Activated naive CD4-positive, alpha-beta T cell treated with anti-CD3 and anti-CD28 coated beads for 36 hours (primary cell): ENCODE measurements at regions of chr16 and their contacts with region 1.

Region 1: GRCh38 chr16:67311607-67312488 is 14.7 kb downstream of the KCTD19 start:
- DNase-seq: peak; percentile 98
- H3K4me3 Mint-ChIP-seq: peak overlapping the region; percentile 13
- H3K27ac Mint-ChIP-seq: peak overlapping the region; percentile 96
- H3K4me1 Mint-ChIP-seq: peaks cover 44% of the 10 kb centered on the region
- H3K27me3 Mint-ChIP-seq: no peaks in the 10 kb centered on the region

Region 2: DNA sequence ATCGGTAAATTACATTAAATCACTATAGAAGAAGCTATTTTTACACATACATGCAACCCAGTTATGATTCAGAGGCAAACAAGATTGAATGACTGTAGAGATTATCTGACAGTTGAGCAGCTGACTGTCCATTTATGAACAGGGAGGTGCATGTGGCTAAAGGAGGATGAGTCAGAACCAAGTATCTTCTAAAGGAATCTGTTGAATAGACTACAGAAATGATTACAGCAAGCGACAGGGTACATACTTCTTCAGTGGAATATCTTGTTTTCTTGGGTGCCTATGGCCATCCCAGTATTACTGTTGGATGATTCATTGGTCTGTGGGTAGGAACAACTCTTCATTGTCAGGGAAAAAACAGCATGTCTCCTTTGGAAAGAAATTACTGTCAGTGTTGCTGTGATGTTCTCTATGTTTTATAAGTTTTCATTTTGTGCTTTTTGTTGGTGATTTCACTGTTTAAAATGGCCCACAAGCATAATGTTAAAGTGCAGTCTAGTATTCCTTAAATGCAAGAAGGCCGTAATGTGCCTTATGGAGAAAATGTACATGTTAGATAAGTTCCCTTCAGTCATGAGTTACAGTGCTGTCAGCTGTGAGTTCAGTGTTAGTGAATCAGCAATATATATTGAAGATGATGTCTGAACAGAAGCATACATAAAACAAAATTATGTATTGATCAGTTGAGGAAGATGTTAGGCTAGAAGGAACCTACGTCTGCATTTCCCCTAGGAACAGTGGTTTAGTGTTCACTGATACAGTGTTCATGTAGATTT is 255.9 kb before region 1 on chr16:
- CTCF ChIA-PET with region 1: no interaction called
- intact Hi-C with region 1: loop called (anchors 2 kb)
- DNase-seq: peak; percentile 26
- H3K4me3 Mint-ChIP-seq: no peak overlapping the region
- H3K27ac Mint-ChIP-seq: peak overlapping the region; percentile 32
- H3K4me1 Mint-ChIP-seq: peaks cover 50% of the 10 kb centered on the region
- H3K27me3 Mint-ChIP-seq: no peaks in the 10 kb centered on the region

Region 3: GRCh38 chr16:67226804-67227557 is 84.9 kb before region 1 on chr16 and contains the start of gene TMEM208:
- CTCF ChIA-PET with region 1: no interaction called
- intact Hi-C with region 1: loop called (anchors 1 kb)
- DNase-seq: peak; percentile 99
- H3K4me3 Mint-ChIP-seq: peak within 1 kb of the TSS; percentile 100
- H3K27ac Mint-ChIP-seq: peak within 1 kb of the TSS; percentile 96
- H3K4me1 Mint-ChIP-seq: peaks cover 51% of the 10 kb centered on the region
- H3K27me3 Mint-ChIP-seq: no peaks in the 10 kb centered on the region
- total RNA-seq, gene TMEM208: 24.6 to 29.4 TPM

Region 4: GRCh38 chr16:67279296-67280089 is 32.4 kb before region 1 on chr16 and contains the start of gene PLEKHG4:
- CTCF ChIA-PET with region 1: interaction called, 4 read pairs
- intact Hi-C with region 1: loop called (anchors 1 kb)
- DNase-seq: peak; percentile 85
- H3K4me3 Mint-ChIP-seq: peak within 1 kb of the TSS; percentile 79
- H3K27ac Mint-ChIP-seq: peak within 1 kb of the TSS; percentile 86
- H3K4me1 Mint-ChIP-seq: peaks cover 20% of the 10 kb centered on the region
- H3K27me3 Mint-ChIP-seq: no peaks in the 10 kb centered on the region
- total RNA-seq, gene PLEKHG4: 14.3 to 14.4 TPM

Region 5: GRCh38 chr16:67349172-67349571 is 37.3 kb after region 1 on chr16:
- CTCF ChIA-PET with region 1: no interaction called
- intact Hi-C with region 1: no loop called
- DNase-seq: no peak
- H3K4me3 Mint-ChIP-seq: no peak overlapping the region
- H3K27ac Mint-ChIP-seq: no peak overlapping the region
- H3K4me1 Mint-ChIP-seq: no peaks in the 10 kb centered on the region
- H3K27me3 Mint-ChIP-seq: no peaks in the 10 kb centered on the region

Region 6: DNA sequence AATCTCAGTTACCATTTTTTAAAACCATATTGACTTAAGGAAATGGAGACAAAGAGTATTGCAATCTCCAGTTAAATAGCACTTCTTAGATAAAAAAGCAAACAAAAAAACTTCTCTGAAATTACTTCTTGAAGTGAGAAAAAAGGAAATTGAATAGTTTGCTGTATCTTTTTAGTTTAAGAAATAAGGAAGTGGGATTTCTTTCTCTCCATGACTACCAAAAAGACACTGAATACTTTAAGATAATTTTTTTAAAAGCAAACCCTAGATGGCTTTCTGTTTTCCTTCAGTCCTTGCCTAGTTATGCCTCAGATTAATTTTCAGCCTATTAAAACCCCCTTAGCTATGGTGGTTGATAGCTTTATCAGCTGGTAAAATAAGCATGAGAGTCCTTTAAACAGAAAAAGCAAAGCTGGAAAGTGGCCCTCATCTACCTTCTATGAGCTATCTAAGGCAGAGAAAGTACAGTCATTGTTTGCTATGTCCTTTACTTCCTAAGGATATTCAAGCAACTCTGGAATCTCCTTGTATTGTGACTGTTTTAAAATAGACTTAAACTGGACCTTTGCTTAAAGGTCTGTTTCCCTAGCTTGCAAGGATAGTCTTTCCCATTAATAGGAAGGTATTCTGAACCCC is 52.9 kb after region 1 on chr16:
- CTCF ChIA-PET with region 1: no interaction called
- intact Hi-C with region 1: loop called (anchors 1 kb)
- DNase-seq: no peak
- H3K4me3 Mint-ChIP-seq: no peak overlapping the region
- H3K27ac Mint-ChIP-seq: no peak overlapping the region
- H3K4me1 Mint-ChIP-seq: peaks cover 10% of the 10 kb centered on the region
- H3K27me3 Mint-ChIP-seq: no peaks in the 10 kb centered on the region

Region 7: DNA sequence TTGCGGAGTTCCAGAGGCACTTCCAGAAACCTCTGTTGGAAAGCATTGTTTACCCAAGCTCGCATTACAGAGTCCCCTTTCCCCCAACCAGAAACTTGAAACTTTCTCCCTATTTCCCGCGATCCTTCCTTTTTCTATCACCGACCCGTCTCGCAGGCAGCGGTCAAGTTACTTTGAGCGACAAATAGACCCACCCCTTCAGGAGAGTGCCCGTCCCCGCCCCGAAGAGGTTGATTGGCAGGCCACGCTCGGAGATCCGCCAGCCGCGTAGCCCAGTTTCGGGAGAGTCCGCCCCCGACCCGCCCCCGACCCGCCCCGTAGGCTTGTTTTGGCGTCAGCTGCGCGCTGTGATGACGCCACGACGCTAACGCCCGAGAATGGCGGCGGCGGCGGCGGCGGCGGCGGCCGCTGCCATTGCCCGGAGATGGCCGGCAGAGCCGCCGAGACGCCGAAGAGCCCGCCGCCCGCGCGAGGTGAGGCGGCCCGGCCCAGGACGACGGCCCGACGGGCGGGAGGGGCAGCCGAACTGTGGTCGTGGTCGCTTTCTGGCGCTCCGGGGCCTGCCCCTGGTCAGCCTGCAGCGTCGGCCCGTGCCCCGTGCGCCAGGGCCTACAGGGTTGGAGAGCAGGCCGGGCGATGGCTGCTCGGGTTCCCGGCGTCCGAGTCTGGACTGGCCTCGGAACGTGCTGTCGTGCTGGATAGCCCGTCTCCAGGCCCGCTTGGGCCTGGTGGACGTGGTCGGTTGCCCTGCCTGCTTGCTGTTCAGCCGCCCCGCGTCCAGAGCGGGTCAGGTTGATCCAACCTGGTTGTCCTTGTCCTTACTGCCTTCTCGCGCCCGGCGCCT is 581.3 kb after region 1 on chr16 and contains the start of gene PSKH1:
- CTCF ChIA-PET with region 1: no interaction called
- intact Hi-C with region 1: loop called (anchors 5 kb)
- DNase-seq: peak; percentile 98
- H3K4me3 Mint-ChIP-seq: peak within 1 kb of the TSS; percentile 79
- H3K27ac Mint-ChIP-seq: peak within 1 kb of the TSS; percentile 82
- H3K4me1 Mint-ChIP-seq: peaks cover 39% of the 10 kb centered on the region
- H3K27me3 Mint-ChIP-seq: no peaks in the 10 kb centered on the region
- total RNA-seq, gene PSKH1: 7.1 to 8.0 TPM